ACHN (cell line): ENCODE measurements at regions of chr1 and their contacts with region 1.

Region 1: GRCh38 chr1:227131193-227131592 is 187.1 kb downstream of the CDC42BPA start:
- DNase-seq: peak; percentile 54

Region 2: GRCh38 chr1:227225715-227226346 is 94.6 kb after region 1 on chr1:
- in situ Hi-C with region 1: no loop called
- DNase-seq: peak; percentile 30

Region 3: DNA sequence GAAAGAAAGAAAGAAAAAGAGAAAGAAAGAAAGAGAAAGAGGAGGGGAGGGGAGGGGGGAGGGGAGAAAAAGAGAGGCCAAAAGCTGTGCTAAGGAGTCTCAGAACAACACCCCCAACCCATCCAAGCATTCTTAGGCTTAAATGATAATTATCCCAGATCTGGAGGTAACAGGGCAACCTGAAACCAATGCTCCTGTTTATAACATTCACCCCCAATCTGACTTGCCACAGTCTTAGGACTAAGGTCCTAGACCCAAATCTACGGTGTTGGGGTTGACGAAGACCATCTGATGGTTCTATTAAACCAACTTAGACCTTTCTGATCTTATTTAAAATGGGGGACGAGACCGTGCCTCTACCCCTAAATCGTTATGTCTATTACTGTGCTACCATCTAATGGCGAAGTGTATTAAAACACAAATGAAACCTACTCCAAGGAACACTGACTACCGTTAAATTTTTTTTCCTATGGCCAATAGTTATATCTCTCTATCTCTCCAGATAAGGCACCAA is 306.4 kb after region 1 on chr1:
- in situ Hi-C with region 1: loop called (anchors 25 kb)
- DNase-seq: peak; percentile 79